PC-9 (cell line): ENCODE measurements at regions of chr20 and their contacts with region 1.

Region 1: GRCh38 chr20:20083807-20084206 is 31.5 kb downstream of the CFAP61 start:
- DNase-seq: peak in 1 of 2 experiments; percentile 46
- H3K4me3 ChIP-seq: no peak overlapping the region; the same call in 1 of the 2 replicates
- H3K27ac ChIP-seq: no peak overlapping the region
- H3K4me1 ChIP-seq: no peaks in the 10 kb centered on the region
- H3K27me3 ChIP-seq: peaks cover 14% of the 10 kb centered on the region
- CTCF ChIP-seq: peak; percentile 72

Region 2: DNA sequence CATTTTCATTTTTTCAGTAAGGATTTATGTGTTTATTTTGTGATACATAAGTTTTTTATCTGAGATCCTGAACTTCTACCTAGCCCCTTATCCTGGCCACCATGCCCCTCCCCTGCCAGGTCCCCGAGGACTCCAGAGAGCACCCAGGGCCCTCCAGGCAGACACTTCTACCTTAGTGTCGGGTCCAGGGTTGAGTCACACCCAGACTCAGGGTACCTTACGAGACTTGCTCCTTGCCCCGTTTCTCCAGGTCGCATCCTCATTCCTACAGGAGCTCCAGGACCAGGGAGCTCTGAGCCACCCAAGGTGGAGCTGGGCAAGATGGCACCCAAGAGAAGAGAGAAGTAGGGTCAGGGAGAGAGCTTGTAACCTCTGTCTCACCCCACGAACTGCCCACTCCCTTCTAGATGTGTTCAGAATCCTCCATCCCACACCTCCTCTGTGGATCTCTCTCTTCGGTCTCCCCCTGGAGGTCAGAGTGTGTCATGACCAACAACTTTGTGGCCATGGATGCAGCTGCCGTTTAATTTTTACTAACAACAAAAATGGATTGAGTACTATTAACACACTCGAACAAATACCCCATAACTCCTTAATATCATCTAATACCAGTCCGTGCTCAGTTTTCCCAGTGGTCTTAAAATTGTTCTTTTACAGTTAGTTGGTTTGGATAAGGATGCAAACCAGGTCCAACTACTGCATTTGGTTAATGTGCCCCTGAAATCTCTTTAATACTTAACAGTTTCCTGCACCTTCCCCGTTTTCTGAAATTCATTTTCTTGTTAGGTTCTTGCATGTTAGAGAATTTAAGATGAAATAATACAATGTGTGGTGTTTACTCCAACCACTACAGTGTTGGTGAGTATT is 153.5 kb after region 1 on chr20:
- CTCF ChIA-PET with region 1: no interaction called
- POLR2A ChIA-PET with region 1: no interaction called
- intact Hi-C with region 1: loop called (anchors 5 kb)
- DNase-seq: peak in 1 of 2 experiments; percentile 21
- H3K4me3 ChIP-seq: no peak overlapping the region
- H3K27ac ChIP-seq: no peak overlapping the region
- H3K4me1 ChIP-seq: no peaks in the 10 kb centered on the region
- H3K27me3 ChIP-seq: peaks cover 62% of the 10 kb centered on the region; the same call in 1 of the 2 replicates
- CTCF ChIP-seq: peak; percentile 74

Region 3: DNA sequence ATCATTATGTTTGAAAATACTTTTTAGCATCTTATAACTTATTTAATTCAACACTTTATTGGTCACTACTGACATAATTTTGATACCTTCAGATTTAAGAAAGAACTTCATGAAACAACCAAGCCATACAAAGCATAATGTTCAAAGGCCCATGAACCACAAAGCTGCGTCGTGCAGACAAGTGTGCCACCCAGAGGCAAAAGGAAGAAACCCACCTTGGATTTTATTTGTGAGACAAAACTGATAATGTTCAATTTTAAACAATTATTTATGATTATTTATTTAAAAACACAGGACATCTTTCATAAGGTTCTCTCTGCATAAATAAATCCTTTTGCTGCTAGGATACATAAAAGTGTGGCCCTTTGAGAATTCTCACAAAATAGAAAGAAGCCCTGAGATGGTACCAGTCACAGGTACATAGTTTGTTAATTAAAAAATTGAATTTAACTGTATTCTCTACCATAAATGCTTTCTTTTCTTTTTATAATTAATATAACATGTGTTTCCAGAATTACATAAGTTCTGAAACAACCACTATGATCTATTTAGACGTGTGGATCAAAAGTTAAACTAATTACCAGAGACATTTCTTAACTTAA is 484.9 kb after region 1 on chr20:
- CTCF ChIA-PET with region 1: no interaction called
- POLR2A ChIA-PET with region 1: no interaction called
- intact Hi-C with region 1: loop called (anchors 5 kb)
- DNase-seq: peak; percentile 10 to 55
- H3K4me3 ChIP-seq: no peak overlapping the region
- H3K27ac ChIP-seq: no peak overlapping the region
- H3K4me1 ChIP-seq: no peaks in the 10 kb centered on the region
- H3K27me3 ChIP-seq: no peaks in the 10 kb centered on the region
- CTCF ChIP-seq: peak; percentile 89

Region 4: DNA sequence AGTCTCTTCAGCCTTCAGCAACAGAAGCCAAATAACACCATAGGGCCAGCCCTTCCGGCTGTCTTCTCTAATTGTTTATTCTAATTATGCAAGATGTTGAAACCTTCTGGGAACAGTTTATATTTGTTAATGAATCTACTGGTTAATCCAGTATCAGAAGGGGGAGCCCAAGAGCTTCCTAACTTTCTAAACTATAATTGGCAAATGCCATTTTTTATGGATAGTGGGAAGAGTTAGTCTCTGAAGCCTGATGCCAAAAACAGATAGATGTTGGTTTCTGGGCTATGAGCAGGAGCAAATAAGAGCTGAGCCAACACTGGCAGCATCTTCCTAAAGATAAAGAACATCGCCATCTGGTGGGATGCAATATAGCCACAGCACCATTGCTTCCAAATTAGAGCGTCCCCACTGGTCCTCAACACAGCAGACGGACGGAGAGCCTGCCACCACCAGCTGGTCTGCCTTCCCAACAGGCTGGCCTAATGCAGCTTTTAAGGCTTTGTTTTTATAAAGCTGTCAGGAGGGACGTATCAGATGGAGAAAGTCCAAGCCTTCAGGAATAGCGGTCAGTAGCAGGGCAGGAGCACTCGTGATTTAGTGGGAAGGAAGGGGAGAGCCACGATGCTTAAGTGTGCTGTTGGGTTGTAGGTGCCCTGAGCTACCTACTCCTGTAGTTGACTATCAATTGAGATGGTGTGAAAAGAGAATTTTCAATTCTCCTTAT is 509.8 kb after region 1 on chr20:
- CTCF ChIA-PET with region 1: interaction called, 5 read pairs
- POLR2A ChIA-PET with region 1: no interaction called
- intact Hi-C with region 1: loop called (anchors 2 kb)
- DNase-seq: peak in 1 of 2 experiments; percentile 8
- H3K4me3 ChIP-seq: no peak overlapping the region
- H3K27ac ChIP-seq: no peak overlapping the region
- H3K4me1 ChIP-seq: no peaks in the 10 kb centered on the region
- H3K27me3 ChIP-seq: no peaks in the 10 kb centered on the region
- CTCF ChIP-seq: peak; percentile 60

Region 5: GRCh38 chr20:20824924-20825584 is 741.2 kb after region 1 on chr20:
- CTCF ChIA-PET with region 1: no interaction called
- POLR2A ChIA-PET with region 1: no interaction called
- intact Hi-C with region 1: loop called (anchors 10 kb)
- DNase-seq: peak in 1 of 2 experiments; percentile 42
- H3K4me3 ChIP-seq: no peak overlapping the region
- H3K27ac ChIP-seq: no peak overlapping the region
- H3K4me1 ChIP-seq: no peaks in the 10 kb centered on the region
- H3K27me3 ChIP-seq: peaks cover 59% of the 10 kb centered on the region
- CTCF ChIP-seq: peak; percentile 86